Colonic mucosa (tissue), 4 donors: ENCODE measurements at regions of chr4 and their contacts with region 1.

Region 1: GRCh38 chr4:129641179-129641578 is 545.2 kb downstream of the C4orf33 start:
- DNase-seq: peak; percentile 56
- H3K4me3 ChIP-seq: no peak overlapping the region
- H3K27ac ChIP-seq: no peak overlapping the region
- H3K4me1 ChIP-seq: no peaks in the 10 kb centered on the region
- H3K27me3 ChIP-seq: no peaks in the 10 kb centered on the region
- CTCF ChIP-seq: peak; percentile 66

Region 2: GRCh38 chr4:129282293-129282692 is 358.9 kb before region 1 on chr4:
- intact Hi-C with region 1: no loop called
- DNase-seq: no peak
- H3K4me3 ChIP-seq: no peak overlapping the region
- H3K27ac ChIP-seq: no peak overlapping the region
- H3K4me1 ChIP-seq: no peaks in the 10 kb centered on the region
- H3K27me3 ChIP-seq: no peaks in the 10 kb centered on the region
- CTCF ChIP-seq: no peak

Region 3: GRCh38 chr4:129362674-129363274 is 278.4 kb before region 1 on chr4:
- intact Hi-C with region 1: loop called (anchors 5 kb)
- DNase-seq: peak; percentile 57
- H3K4me3 ChIP-seq: no peak overlapping the region
- H3K27ac ChIP-seq: no peak overlapping the region
- H3K4me1 ChIP-seq: no peaks in the 10 kb centered on the region
- H3K27me3 ChIP-seq: no peaks in the 10 kb centered on the region
- CTCF ChIP-seq: peak; percentile 67